MCF 10A (cell line): ENCODE measurements at regions of chr6 and their contacts with region 1.

Region 1: GRCh38 chr6:142474531-142475289 is 172.9 kb downstream of the ADGRG6 start:
- DNase-seq: peak; percentile 72
- H3K4me3 Mint-ChIP-seq: no peak overlapping the region
- H3K27ac Mint-ChIP-seq: no peak overlapping the region
- H3K4me1 Mint-ChIP-seq: peaks cover 7% of the 10 kb centered on the region
- H3K27me3 Mint-ChIP-seq: peaks cover 5% of the 10 kb centered on the region
- CTCF ChIP-seq: peak; percentile 66

Region 2: GRCh38 chr6:142155895-142156757 is 318.6 kb before region 1 on chr6:
- CTCF ChIA-PET with region 1: interaction called, 12 read pairs
- POLR2A ChIA-PET with region 1: no interaction called
- intact Hi-C with region 1: no loop called
- DNase-seq: peak; percentile 33
- H3K4me3 Mint-ChIP-seq: peak overlapping the region; percentile 4
- H3K27ac Mint-ChIP-seq: peak overlapping the region; percentile 59
- H3K4me1 Mint-ChIP-seq: peaks cover 6% of the 10 kb centered on the region
- H3K27me3 Mint-ChIP-seq: no peaks in the 10 kb centered on the region
- CTCF ChIP-seq: peak; percentile 46

Region 3: GRCh38 chr6:142485256-142485655 is 10.5 kb after region 1 on chr6:
- CTCF ChIA-PET with region 1: interaction called, 17 read pairs
- POLR2A ChIA-PET with region 1: interaction called, 4 read pairs
- intact Hi-C with region 1: no loop called
- DNase-seq: peak; percentile 62
- H3K4me3 Mint-ChIP-seq: no peak overlapping the region
- H3K27ac Mint-ChIP-seq: no peak overlapping the region
- H3K4me1 Mint-ChIP-seq: no peaks in the 10 kb centered on the region
- H3K27me3 Mint-ChIP-seq: no peaks in the 10 kb centered on the region
- CTCF ChIP-seq: no peak

Region 4: DNA sequence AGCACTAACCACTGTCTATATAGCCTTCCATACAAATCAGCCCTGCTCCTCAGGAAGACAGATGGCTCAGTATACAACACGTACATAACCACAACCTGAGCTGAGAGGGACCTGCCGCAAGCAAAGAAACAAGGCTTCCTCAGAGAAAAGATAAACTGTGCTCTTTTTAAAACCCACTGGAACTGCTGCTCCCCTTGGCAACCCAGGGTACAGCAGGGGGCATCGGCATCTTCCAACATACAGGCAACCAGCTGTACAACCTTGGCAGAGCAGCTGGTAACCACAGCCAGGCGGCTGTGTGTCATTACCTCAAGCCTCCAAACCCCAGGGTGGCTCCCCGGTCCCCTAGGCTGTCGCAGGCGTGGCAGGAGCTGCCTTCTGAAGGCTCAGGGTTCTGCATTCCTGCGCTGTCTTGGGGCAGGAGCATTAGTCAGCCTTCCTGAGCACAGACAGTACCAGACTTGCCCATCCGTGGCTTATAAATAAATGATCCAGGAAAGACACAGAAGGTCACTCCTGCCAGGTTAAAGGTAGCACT is 76.6 kb after region 1 on chr6:
- CTCF ChIA-PET with region 1: interaction called, 17 read pairs
- POLR2A ChIA-PET with region 1: interaction called, 3 read pairs
- intact Hi-C with region 1: no loop called
- DNase-seq: peak; percentile 60
- H3K4me3 Mint-ChIP-seq: peak overlapping the region; percentile 10
- H3K27ac Mint-ChIP-seq: peak overlapping the region; percentile 90
- H3K4me1 Mint-ChIP-seq: peaks cover 15% of the 10 kb centered on the region
- H3K27me3 Mint-ChIP-seq: no peaks in the 10 kb centered on the region
- CTCF ChIP-seq: no peak

Region 5: DNA sequence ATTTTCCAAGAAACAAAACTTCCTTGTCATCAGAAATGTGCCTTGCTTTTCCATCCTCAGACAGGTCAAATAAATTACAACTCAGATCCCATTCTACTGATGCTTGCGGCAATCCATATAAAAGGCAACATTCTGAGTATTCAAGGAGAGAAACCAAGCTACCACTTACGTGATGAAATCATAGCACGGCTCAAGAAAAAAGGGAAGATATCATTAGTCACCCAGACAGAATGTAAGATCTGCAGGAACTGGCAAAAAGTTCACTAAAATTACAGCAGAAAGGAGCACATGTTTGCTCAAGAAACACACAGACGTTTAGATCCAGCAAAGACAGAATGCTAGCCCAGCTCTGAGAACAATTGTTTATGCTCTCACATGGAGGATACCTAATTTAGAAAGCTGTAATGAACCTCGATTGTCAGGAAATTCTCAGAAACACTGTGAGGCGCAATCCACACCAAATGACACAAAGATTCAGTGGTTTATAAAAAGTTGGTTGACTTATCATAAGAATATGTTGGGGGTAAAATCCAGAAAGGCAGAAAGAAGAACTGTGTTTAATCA is 131.3 kb after region 1 on chr6:
- CTCF ChIA-PET with region 1: no interaction called
- POLR2A ChIA-PET with region 1: no interaction called
- intact Hi-C with region 1: no loop called
- DNase-seq: peak; percentile 32
- H3K4me3 Mint-ChIP-seq: no peak overlapping the region
- H3K27ac Mint-ChIP-seq: peak overlapping the region; percentile 40
- H3K4me1 Mint-ChIP-seq: peaks cover 9% of the 10 kb centered on the region
- H3K27me3 Mint-ChIP-seq: no peaks in the 10 kb centered on the region
- CTCF ChIP-seq: no peak

Region 6: GRCh38 chr6:143427109-143427817 is 952.6 kb after region 1 on chr6:
- CTCF ChIA-PET with region 1: interaction called, 8 read pairs
- POLR2A ChIA-PET with region 1: no interaction called
- intact Hi-C with region 1: loop called (anchors 1 kb)
- DNase-seq: peak; percentile 78
- H3K4me3 Mint-ChIP-seq: no peak overlapping the region
- H3K27ac Mint-ChIP-seq: peak overlapping the region; percentile 84
- H3K4me1 Mint-ChIP-seq: peaks cover 11% of the 10 kb centered on the region
- H3K27me3 Mint-ChIP-seq: no peaks in the 10 kb centered on the region
- CTCF ChIP-seq: peak; percentile 98

Region 7: DNA sequence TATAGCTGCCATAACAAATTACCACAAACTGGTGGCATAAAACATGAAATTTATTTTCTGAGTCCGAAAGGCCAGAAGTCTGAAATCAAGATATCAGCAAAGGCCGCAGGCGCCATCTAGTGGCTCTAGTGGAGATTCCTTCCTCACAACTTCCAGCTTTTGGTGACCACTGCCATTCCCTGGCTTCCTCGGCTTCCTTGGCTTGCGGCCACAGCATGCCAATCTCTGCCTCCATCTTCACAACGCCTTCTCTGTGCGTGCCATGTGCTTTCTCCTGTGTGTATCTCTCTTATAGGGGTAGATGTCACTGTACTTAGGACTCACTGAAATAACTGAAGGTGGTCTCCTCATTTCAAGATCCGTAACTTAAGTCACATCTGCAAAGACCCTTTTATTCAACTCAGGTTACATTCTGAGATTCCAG is 1538.8 kb after region 1 on chr6:
- CTCF ChIA-PET with region 1: interaction called, 3 read pairs
- POLR2A ChIA-PET with region 1: no interaction called
- intact Hi-C with region 1: loop called (anchors 10 kb)
- DNase-seq: peak; percentile 90
- H3K4me3 Mint-ChIP-seq: no peak overlapping the region
- H3K27ac Mint-ChIP-seq: no peak overlapping the region
- H3K4me1 Mint-ChIP-seq: no peaks in the 10 kb centered on the region
- H3K27me3 Mint-ChIP-seq: peaks cover 13% of the 10 kb centered on the region
- CTCF ChIP-seq: peak; percentile 94